ENCODE measurements at regions of chr2 and their contacts with region 1.

Region 1: DNA sequence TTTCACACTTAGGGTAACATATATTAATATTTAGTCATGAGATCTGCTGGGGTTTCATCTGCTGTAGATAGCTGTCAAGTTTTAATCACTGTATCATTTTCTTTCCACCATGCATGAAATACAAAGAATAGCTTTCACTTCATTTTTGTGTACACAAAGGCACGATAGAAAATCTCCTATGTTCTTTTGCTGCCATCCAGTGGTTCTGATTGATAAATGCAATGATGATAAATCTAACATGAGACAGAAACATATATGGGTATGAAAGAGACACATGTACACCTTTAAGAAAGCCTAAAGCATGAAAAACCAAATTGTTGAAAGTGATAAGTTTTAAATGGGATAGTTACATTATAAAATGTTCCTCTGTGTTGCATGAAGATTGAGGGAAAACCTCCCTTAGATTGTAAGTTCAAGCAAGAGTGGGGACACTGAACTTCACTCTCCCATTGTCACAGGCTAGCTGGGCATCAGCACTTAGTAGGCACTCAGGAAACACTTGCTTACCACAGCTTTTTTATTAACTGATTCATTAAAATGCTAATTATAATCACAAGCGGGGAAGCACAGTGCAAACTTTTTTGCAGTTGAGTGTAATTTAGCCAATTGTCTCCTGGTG is 31.2 kb downstream of the C1D start:
- DNase-seq: peak; percentile 77
- H3K4me3 ChIP-seq: peak overlapping the region; percentile 30; the same call in 1 of the 2 replicates
- H3K27ac ChIP-seq: no peak overlapping the region
- H3K4me1 ChIP-seq: peaks cover 21% of the 10 kb centered on the region
- H3K27me3 ChIP-seq: no peaks in the 10 kb centered on the region

Region 2: GRCh38 chr2:67650291-67651133 is 381.1 kb before region 1 on chr2:
- in situ Hi-C with region 1: loop called (anchors 25 kb)
- DNase-seq: peak; percentile 95
- H3K4me3 ChIP-seq: peak overlapping the region; percentile 41
- H3K27ac ChIP-seq: peak overlapping the region; percentile 37
- H3K4me1 ChIP-seq: peaks cover 40% of the 10 kb centered on the region
- H3K27me3 ChIP-seq: no peaks in the 10 kb centered on the region

Region 3: DNA sequence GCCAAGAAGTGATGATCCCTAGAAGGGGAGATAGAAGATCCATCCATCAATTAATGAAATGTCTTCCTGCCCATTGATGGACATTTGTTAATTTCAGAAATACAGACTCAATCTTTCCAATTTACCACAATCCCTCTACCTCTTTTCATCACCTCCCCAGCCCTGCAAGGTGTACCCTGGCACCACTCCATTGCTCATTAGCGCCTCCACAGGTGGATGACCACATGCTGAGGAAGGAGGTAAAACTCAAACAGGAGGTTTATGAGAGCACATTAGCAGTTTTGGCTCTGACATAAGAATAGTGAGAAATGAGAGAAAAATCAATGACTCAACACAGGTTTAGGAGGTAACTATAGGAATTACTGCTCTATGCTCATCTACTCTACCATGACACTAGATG is 176.9 kb before region 1 on chr2:
- in situ Hi-C with region 1: loop called (anchors 10 kb)
- DNase-seq: no peak
- H3K4me3 ChIP-seq: no peak overlapping the region
- H3K27ac ChIP-seq: no peak overlapping the region
- H3K4me1 ChIP-seq: peaks cover 10% of the 10 kb centered on the region
- H3K27me3 ChIP-seq: no peaks in the 10 kb centered on the region

Measured in GM23248 (cell line).